SK-N-SH (cell line): ENCODE measurements at regions of chr9 and their contacts with region 1.

Region 1: DNA sequence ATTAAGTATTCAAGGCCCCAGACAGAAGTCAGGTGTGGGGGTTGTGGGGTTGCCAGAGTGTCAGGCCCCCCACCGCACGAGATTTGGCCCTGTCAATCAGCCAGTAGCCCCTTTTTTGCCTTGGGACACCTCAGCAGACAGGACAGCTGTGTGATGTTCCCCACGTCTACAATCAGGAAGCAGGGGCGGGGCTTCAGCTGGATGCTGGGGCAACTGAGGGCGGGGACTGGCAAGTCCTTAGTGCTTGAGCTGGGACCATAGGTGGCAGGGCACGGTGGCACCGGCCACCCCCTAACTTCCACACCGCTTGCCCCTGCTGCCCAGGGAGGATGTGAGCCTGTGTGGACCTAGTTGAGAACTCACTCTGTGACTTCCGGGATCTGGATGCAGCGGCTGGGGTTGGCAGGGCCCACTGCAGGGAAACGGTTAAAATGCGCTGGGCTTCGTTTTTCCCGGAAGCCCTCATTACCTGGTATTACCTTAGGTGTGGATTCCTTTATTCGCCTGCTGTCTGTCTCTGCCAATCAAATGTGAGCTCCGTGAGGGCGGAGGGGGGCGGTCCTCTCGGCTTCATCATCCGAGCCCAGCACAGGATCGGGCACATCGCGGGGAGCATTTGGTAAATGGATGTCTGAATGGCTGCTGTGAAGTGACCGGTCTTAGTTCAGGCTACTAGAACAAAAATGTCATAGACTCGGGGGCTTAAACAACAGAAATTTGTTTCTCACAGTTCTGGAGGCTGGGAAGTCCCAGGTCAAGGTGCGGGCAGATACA is 7.5 kb upstream of the GTF3C5 start:
- DNase-seq: no peak
- H3K4me3 ChIP-seq: no peak overlapping the region
- H3K27ac ChIP-seq: no peak overlapping the region
- H3K4me1 ChIP-seq: peaks cover 0 to 4% of the 10 kb centered on the region in 2 experiments; a peak in 1 of 4 replicates
- H3K27me3 ChIP-seq: no peaks in the 10 kb centered on the region; the same call in 1 of the 2 replicates
- CTCF ChIP-seq: no peak
- EP300 ChIP-seq: no peak
- RAD21 ChIP-seq: no peak

Region 2: GRCh38 chr9:132994410-132995120 is 28.7 kb before region 1 on chr9:
- CTCF ChIA-PET with region 1: interaction called, 25 read pairs
- POLR2A ChIA-PET with region 1: no interaction called
- DNase-seq: peak; percentile 8
- H3K4me3 ChIP-seq: no peak overlapping the region
- H3K27ac ChIP-seq: no peak overlapping the region
- H3K4me1 ChIP-seq: no peaks in the 10 kb centered on the region; a peak in 1 of 4 replicates
- H3K27me3 ChIP-seq: peaks cover 48% of the 10 kb centered on the region
- CTCF ChIP-seq: no peak
- EP300 ChIP-seq: no peak
- RAD21 ChIP-seq: no peak

Region 3: DNA sequence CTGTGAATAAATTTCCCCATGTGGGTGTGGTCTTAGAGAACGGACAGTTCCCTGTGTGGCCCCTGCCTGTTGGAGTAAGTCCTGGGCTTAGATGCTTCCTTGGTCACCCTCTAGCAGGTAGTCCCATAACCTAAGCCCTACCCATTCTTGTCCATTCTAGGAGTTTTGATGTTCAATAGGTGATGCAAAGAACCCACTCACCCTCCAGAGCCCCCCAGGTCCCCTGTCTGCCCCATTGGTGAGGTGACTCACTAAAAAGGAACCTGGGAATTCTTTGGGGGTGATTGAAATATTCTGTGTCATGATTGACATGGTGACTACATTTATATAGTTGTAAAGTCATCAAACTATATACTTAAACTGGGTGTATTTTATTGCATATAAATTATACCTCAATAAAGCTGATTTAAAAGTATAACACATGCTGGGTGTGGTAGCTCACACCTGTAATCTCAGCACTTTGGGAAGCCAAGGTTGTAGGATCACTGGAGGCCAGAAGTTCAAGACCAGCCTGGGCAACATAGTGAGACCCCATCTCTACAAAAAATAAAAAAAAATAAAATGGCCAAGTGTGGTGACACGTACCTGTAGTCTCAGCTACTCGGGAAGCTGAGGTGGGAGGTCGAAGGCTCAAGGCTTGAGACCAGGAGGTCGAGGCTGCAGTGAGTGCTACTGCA is 13.3 kb before region 1 on chr9:
- CTCF ChIA-PET with region 1: interaction called, 39 read pairs
- POLR2A ChIA-PET with region 1: no interaction called
- DNase-seq: no peak
- H3K4me3 ChIP-seq: no peak overlapping the region
- H3K27ac ChIP-seq: no peak overlapping the region
- H3K4me1 ChIP-seq: no peaks in the 10 kb centered on the region
- H3K27me3 ChIP-seq: peaks cover 7% of the 10 kb centered on the region; the same call in 1 of the 2 replicates
- CTCF ChIP-seq: no peak
- EP300 ChIP-seq: no peak
- RAD21 ChIP-seq: no peak

Region 4: GRCh38 chr9:133121198-133121939 is 98.1 kb after region 1 on chr9 and contains the start of gene RALGDS:
- CTCF ChIA-PET with region 1: interaction called, 12 read pairs
- POLR2A ChIA-PET with region 1: interaction called, 3 read pairs
- DNase-seq: peak; percentile 97
- H3K4me3 ChIP-seq: peak within 1 kb of the TSS; percentile 71 to 79
- H3K27ac ChIP-seq: peak within 1 kb of the TSS in 1 of 2 experiments; percentile 99; a peak in 3 of 4 replicates
- H3K4me1 ChIP-seq: peaks cover 18 to 65% of the 10 kb centered on the region in 2 experiments
- H3K27me3 ChIP-seq: no peaks in the 10 kb centered on the region
- CTCF ChIP-seq: no peak
- EP300 ChIP-seq: no peak
- RAD21 ChIP-seq: no peak
- polyA plus RNA-seq, gene RALGDS: 64.1 and 64.7 TPM in 2 replicates